CD8-positive, alpha-beta memory T cell (primary cell): ENCODE measurements at regions of chr7 and their contacts with region 1.

Region 1: DNA sequence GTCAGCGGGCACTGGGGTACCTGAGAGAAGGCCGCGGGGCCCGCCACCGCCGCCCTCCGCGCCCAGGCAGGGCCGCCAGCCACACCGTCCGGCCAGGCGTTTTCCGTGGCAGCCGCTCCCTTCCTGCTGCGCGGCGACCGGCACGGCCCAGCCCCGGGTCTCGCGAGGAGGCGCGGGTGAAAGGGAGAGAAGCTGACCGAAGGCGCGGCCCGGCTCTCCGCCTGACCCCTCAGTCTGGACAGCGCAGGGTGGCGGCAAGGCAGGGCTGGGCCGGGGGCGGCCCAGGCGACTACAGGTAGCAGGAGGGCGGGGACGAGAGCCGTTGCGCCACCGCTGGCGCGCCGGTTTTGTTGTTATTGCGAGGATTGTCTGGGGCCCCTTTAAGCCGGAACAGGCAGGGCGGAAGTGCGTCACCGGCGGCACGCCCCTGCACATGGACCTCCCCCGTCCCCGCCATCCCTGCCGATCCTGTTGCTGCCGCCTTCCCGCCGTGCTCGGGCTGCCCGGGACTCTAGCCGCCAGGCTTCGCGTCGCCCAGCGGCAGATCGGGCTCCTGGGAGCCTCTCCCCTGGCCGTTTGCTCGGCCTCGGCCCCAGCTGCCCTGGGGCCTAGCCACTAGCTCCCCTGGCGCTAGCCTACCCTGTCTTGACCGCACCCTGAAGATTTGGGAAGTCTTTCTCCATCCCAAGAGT is at the start of gene HERPUD2:
- DNase-seq: peak; percentile 89 to 95 (median 92)
- H3K4me3 ChIP-seq: peak within 1 kb of the TSS; percentile 98
- H3K4me3 Mint-ChIP-seq: peak within 1 kb of the TSS; percentile 86 to 99 (median 97)
- H3K27ac ChIP-seq: peak within 1 kb of the TSS; percentile 98
- H3K27ac Mint-ChIP-seq: peak within 1 kb of the TSS; percentile 92 to 99 (median 99)
- H3K4me1 ChIP-seq: peaks cover 22% of the 10 kb centered on the region
- H3K4me1 Mint-ChIP-seq: peaks cover 45 to 59% (median 48%) of the 10 kb centered on the region in 3 donors
- H3K27me3 ChIP-seq: no peaks in the 10 kb centered on the region
- H3K27me3 Mint-ChIP-seq: no peaks in the 10 kb centered on the region
- total RNA-seq, gene HERPUD2: 31.3 to 34.1 TPM

Region 2: DNA sequence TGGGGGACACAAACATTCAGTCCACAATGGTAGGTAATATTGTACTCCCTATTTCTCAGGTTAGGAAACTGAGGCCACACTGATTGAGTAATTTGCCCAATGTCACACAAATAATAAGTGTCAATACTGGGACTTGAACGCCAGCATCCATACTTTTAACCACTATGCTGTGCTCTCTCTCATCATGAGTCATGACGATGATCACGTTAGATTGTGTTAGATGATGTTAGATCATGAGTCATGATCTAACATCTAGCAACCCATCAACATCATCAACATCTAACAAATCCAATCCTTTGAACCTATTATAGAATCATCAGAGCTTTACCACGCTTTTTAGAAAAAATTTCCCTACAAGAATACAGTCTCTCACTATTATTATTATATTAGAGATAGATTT is 28.1 kb after region 1 on chr7:
- CTCF ChIA-PET with region 1: interaction called, 14 read pairs
- POLR2A ChIA-PET with region 1: interaction called, 10 read pairs
- DNase-seq: peak in 1 of 5 donors; percentile 65
- H3K4me3 ChIP-seq: no peak overlapping the region
- H3K4me3 Mint-ChIP-seq: peak overlapping the region in 2 of 7 donors; percentile 15 to 58
- H3K27ac ChIP-seq: no peak overlapping the region
- H3K27ac Mint-ChIP-seq: peak overlapping the region; percentile 21 to 97 (median 90)
- H3K4me1 ChIP-seq: peaks cover 50% of the 10 kb centered on the region
- H3K4me1 Mint-ChIP-seq: peaks cover 55 to 64% (median 64%) of the 10 kb centered on the region in 3 donors
- H3K27me3 ChIP-seq: no peaks in the 10 kb centered on the region
- H3K27me3 Mint-ChIP-seq: peaks cover 0 to 2% of the 10 kb centered on the region in 2 donors

Region 3: GRCh38 chr7:35729061-35729783 is 34.3 kb after region 1 on chr7:
- CTCF ChIA-PET with region 1: interaction called, 14 read pairs
- POLR2A ChIA-PET with region 1: interaction called, 10 read pairs
- DNase-seq: peak in 4 of 5 donors; percentile 46 to 81 (median 65)
- H3K4me3 ChIP-seq: no peak overlapping the region
- H3K4me3 Mint-ChIP-seq: peak overlapping the region; percentile 27 to 87 (median 62)
- H3K27ac ChIP-seq: peak overlapping the region; percentile 17
- H3K27ac Mint-ChIP-seq: peak overlapping the region; percentile 75 to 98 (median 96)
- H3K4me1 ChIP-seq: peaks cover 59% of the 10 kb centered on the region
- H3K4me1 Mint-ChIP-seq: peaks cover 67 to 76% (median 73%) of the 10 kb centered on the region in 3 donors
- H3K27me3 ChIP-seq: no peaks in the 10 kb centered on the region
- H3K27me3 Mint-ChIP-seq: peaks cover 0 to 3% of the 10 kb centered on the region in 2 donors

Region 4: GRCh38 chr7:35801392-35802101 is 106.6 kb after region 1 on chr7:
- CTCF ChIA-PET with region 1: interaction called, 11 read pairs
- POLR2A ChIA-PET with region 1: interaction called, 62 read pairs
- DNase-seq: peak; percentile 73 to 86 (median 82)
- H3K4me3 ChIP-seq: peak overlapping the region; percentile 68
- H3K4me3 Mint-ChIP-seq: peak overlapping the region; percentile 86 to 97 (median 97)
- H3K27ac ChIP-seq: peak overlapping the region; percentile 96
- H3K27ac Mint-ChIP-seq: peak overlapping the region; percentile 98 to 100 (median 99)
- H3K4me1 ChIP-seq: peaks cover 46% of the 10 kb centered on the region
- H3K4me1 Mint-ChIP-seq: peaks cover 49 to 59% (median 54%) of the 10 kb centered on the region in 3 donors
- H3K27me3 ChIP-seq: no peaks in the 10 kb centered on the region
- H3K27me3 Mint-ChIP-seq: peaks cover 0 to 3% of the 10 kb centered on the region in 2 donors